ENCODE measurements at regions of chr1 and their contacts with region 1.

Region 1: GRCh38 chr1:41919764-41920397 is 1.2 kb upstream of the HIVEP3 start:
- DNase-seq: peak; percentile 40 to 85 (median 62)
- ATAC-seq: peak; percentile 71 to 87 (median 84)
- H3K4me3 ChIP-seq: peak overlapping the region in 9 of 12 donors; percentile 24 to 48 (median 31)
- H3K27ac ChIP-seq: peak overlapping the region in 5 of 12 donors; percentile 25 to 40 (median 36)
- H3K4me1 ChIP-seq: peaks cover 3 to 48% (median 29%) of the 10 kb centered on the region in 12 donors
- H3K27me3 ChIP-seq: peaks cover 0 to 15% (median 0%) of the 10 kb centered on the region in 9 donors
- CTCF ChIP-seq: no peak
- POLR2A ChIP-seq: peak in 1 of 2 donors; percentile 19

Region 2: DNA sequence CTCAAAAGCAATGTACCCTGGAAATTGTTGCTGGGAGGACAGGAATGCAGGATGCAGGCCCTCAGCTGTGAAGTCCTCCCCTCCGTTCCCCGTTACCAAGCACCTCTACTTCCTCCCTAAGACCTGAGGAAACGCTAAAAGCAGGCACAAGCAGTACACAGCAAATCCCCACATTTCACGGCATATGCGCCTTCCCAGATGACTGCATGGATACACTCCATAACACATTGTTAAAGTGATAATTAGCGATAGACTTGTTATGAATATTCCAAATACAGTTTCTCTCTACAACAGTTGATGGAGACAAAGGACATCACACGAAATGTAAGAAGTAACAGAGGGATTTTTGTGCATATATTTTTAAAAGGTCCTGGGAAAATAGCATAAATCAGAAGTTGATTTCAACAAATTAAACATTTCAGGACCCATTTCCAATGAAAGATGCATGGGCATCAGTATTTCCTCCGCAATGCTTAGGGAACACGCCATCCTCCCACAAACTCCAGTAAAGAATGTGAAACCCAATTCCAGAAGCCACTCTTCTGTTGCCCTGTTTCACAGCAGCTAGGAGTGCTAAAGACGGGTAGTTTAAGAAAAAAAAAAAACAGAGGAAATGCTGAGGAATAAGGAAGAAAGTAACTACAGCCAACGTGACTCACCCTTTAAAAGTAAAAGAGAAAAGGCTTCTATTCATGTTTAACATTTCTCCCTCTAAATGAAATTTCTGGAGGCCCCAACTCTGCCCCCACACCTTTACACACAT is 76.7 kb before region 1 on chr1:
- intact Hi-C with region 1: loop called in 1 of 10 experiments (anchors 10 kb)
- DNase-seq: no peak
- ATAC-seq: no peak
- H3K4me3 ChIP-seq: no peak overlapping the region
- H3K27ac ChIP-seq: peak overlapping the region in 1 of 12 donors; percentile 30
- H3K4me1 ChIP-seq: peaks cover 0 to 56% (median 15%) of the 10 kb centered on the region in 12 donors
- H3K27me3 ChIP-seq: no peaks in the 10 kb centered on the region
- CTCF ChIP-seq: peak in 1 of 12 donors; percentile 8
- POLR2A ChIP-seq: no peak

Region 3: GRCh38 chr1:41882068-41882477 is 37.8 kb before region 1 on chr1:
- intact Hi-C with region 1: loop called in 1 of 10 experiments (anchors 5 kb)
- DNase-seq: no peak
- ATAC-seq: peak in 1 of 4 donors; percentile 4
- H3K4me3 ChIP-seq: no peak overlapping the region
- H3K27ac ChIP-seq: peak overlapping the region; percentile 37 to 77 (median 66)
- H3K4me1 ChIP-seq: peaks cover 0 to 75% (median 30%) of the 10 kb centered on the region in 12 donors
- H3K27me3 ChIP-seq: no peaks in the 10 kb centered on the region
- CTCF ChIP-seq: no peak
- POLR2A ChIP-seq: no peak

Measured in heart left ventricle (tissue), 16 donors.